H1 (cell line): ENCODE measurements at regions of chr11 and their contacts with region 1.

Region 1: DNA sequence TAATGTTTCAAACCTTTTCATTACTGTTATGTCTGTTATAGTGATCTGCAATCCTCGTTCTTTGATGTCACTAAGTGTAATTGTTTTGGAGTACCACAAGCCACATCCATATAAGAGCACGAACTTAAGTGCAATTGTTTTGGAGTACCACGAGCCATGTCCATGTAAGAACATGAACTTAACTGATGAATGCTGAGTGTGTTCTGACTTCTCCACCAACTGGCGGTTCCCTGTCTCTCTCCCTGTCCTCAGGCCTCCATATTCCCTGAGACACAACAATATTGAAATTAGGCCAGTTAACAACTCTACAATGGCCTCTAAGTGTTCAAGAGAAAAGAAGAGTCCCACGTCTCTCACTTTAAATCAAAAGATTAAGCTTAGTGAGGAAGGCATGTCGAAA is 23.5 kb downstream of the TESMIN start:
- DNase-seq: no peak
- H3K4me3 ChIP-seq: no peak overlapping the region
- H3K27ac ChIP-seq: no peak overlapping the region
- H3K4me1 ChIP-seq: peaks cover 0 to 3% (median 0%) of the 10 kb centered on the region in 4 experiments; a peak in 3 of 7 replicates
- H3K27me3 ChIP-seq: no peaks in the 10 kb centered on the region
- CTCF ChIP-seq: no peak; a peak in 1 of 4 replicates
- EP300 ChIP-seq: no peak
- POLR2A ChIP-seq: no peak
- RAD21 ChIP-seq: peak; percentile 42 to 47; a peak in 3 of 4 replicates

Region 2: DNA sequence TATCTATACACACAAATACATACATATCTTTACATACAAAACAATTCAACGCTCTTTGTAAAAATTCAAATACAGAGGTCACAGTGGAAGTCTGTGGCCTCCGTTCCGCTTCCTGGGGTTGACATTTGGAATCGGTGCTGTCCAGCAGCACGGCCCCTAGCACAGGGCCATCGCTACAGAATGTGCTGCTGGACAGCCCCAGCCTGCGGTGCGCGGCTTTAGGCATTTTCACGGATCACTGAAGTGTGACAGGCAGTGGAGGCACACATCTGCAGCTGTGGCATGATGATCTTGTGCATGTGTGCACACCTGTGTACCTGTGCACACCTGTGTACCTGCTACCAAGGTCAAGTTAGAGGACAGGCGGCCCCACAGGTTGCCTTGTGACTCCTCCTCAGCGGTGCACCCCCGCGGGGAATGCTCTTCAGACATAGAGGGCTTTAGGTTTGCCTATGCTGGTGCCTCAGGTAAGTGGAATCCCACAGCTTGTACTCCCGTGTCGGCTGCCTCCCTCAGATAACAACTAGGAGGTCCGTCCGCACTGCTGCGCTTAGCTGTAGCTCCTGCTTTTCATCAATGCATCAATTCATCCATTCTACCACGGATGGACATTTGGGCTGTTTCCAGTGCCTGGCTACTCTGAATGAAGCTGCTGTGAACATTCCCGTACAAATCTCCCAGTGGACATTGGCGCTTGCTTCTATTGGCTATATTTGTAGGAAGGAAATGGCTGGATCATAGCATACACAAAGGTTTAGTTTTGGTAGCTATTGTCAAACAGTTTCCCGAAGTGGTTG is 13.5 kb before region 1 on chr11:
- CTCF ChIA-PET with region 1: interaction called, 12 read pairs
- POLR2A ChIA-PET with region 1: interaction called, 3 read pairs
- DNase-seq: no peak
- H3K4me3 ChIP-seq: no peak overlapping the region
- H3K27ac ChIP-seq: no peak overlapping the region
- H3K4me1 ChIP-seq: peaks cover 0 to 7% (median 1%) of the 10 kb centered on the region in 4 experiments; a peak in 4 of 7 replicates
- H3K27me3 ChIP-seq: no peaks in the 10 kb centered on the region
- CTCF ChIP-seq: no peak
- EP300 ChIP-seq: no peak
- POLR2A ChIP-seq: no peak
- RAD21 ChIP-seq: no peak

Region 3: GRCh38 chr11:68763926-68764639 is 36.3 kb after region 1 on chr11:
- CTCF ChIA-PET with region 1: no interaction called
- POLR2A ChIA-PET with region 1: no interaction called
- DNase-seq: no peak
- H3K4me3 ChIP-seq: no peak overlapping the region
- H3K27ac ChIP-seq: no peak overlapping the region
- H3K4me1 ChIP-seq: peaks cover 0 to 6% (median 2%) of the 10 kb centered on the region in 4 experiments; a peak in 2 of 7 replicates
- H3K27me3 ChIP-seq: no peaks in the 10 kb centered on the region
- CTCF ChIP-seq: peak; percentile 42 to 51 (median 43)
- EP300 ChIP-seq: no peak
- POLR2A ChIP-seq: no peak
- RAD21 ChIP-seq: peak; percentile 58 to 70